Mammary epithelial cell (primary cell): ENCODE measurements at regions of chr4 and their contacts with region 1.

Region 1: GRCh38 chr4:48815478-48815877 is 15.4 kb upstream of the OCIAD1 start:
- DNase-seq: no peak
- H3K4me3 ChIP-seq: no peak overlapping the region
- H3K27ac ChIP-seq: no peak overlapping the region
- H3K4me1 ChIP-seq: no peaks in the 10 kb centered on the region
- H3K27me3 ChIP-seq: no peaks in the 10 kb centered on the region
- CTCF ChIP-seq: no peak

Region 2: DNA sequence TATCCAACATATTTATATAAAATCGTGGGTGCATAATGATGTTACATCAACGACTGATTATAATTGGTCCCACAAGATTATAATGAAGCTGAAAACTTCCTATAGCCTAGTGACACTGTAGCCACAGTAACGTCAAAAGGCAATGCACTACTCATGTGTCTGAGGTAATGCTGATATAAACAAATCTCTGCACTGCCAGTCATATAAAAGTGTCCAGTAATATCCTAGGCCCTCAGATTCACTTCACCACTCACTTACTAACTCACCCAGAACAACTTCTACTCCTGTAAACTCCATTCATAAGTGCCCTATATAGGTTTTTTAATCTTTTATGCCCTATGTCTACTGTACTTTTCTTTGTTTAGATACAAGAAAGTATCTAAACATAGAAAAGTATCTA is 54.2 kb before region 1 on chr4:
- CTCF ChIA-PET with region 1: no interaction called
- dilution Hi-C with region 1: loop called (anchors 5 kb)
- in situ Hi-C with region 1: no loop called
- intact Hi-C with region 1: no loop called
- DNase-seq: no peak
- H3K4me3 ChIP-seq: no peak overlapping the region
- H3K27ac ChIP-seq: no peak overlapping the region
- H3K4me1 ChIP-seq: peaks cover 5% of the 10 kb centered on the region
- H3K27me3 ChIP-seq: no peaks in the 10 kb centered on the region
- CTCF ChIP-seq: no peak

Region 3: GRCh38 chr4:48898733-48899431 is 83.4 kb after region 1 on chr4:
- CTCF ChIA-PET with region 1: no interaction called
- dilution Hi-C with region 1: no loop called
- in situ Hi-C with region 1: no loop called
- intact Hi-C with region 1: no loop called
- DNase-seq: no peak
- H3K4me3 ChIP-seq: no peak overlapping the region
- H3K27ac ChIP-seq: no peak overlapping the region
- H3K4me1 ChIP-seq: peaks cover 9% of the 10 kb centered on the region
- H3K27me3 ChIP-seq: no peaks in the 10 kb centered on the region
- CTCF ChIP-seq: no peak